ENCODE measurements at regions of chr3 and their contacts with region 1.

Region 1: GRCh38 chr3:32467333-32468070 is 35.1 kb downstream of the CMTM6 start:
- DNase-seq: peak; percentile 55 to 98 (median 84)
- ATAC-seq: peak; percentile 89 to 94 (median 92)
- H3K4me3 ChIP-seq: peak overlapping the region; percentile 13 to 43 (median 28)
- H3K27ac ChIP-seq: peak overlapping the region in 3 of 4 donors; percentile 29 to 57 (median 32)
- H3K4me1 ChIP-seq: peaks cover 0 to 11% (median 4%) of the 10 kb centered on the region in 3 donors
- H3K27me3 ChIP-seq: no peaks in the 10 kb centered on the region
- CTCF ChIP-seq: peak; percentile 97 to 99 (median 98)

Region 2: DNA sequence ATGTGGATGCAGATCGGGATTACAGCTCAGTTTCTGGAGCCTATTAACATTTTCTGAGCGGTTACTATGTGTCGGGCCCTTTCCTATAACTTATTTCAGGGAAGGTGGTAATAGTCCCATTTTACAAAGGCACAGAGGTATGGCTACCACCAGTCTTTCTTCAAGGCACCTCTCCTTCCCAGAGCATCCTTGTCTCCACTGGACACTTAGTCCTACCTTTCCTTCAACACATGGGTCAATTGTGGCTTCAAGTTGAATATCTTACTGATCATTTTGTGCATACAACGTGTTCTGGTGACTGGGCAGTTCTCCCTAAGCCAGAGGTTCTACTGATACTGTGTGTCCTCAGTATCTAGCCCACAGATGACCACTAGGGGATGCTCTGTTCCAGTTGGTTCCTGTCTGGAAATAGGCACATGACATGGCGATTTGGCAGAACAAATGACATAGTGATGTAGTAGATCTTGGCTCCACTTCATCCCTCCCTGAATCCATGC is 289.8 kb before region 1 on chr3:
- intact Hi-C with region 1: loop called in 1 of 3 experiments (anchors 10 kb)
- DNase-seq: peak in 4 of 6 donors; percentile 55 to 83 (median 78)
- ATAC-seq: peak; percentile 92 to 98 (median 96)
- H3K4me3 ChIP-seq: no peak overlapping the region
- H3K27ac ChIP-seq: no peak overlapping the region
- H3K4me1 ChIP-seq: no peaks in the 10 kb centered on the region
- H3K27me3 ChIP-seq: no peaks in the 10 kb centered on the region
- CTCF ChIP-seq: peak; percentile 59 to 74 (median 69)

Region 3: GRCh38 chr3:32340039-32340438 is 127.5 kb before region 1 on chr3:
- intact Hi-C with region 1: no loop called
- DNase-seq: peak in 1 of 6 donors; percentile 25
- ATAC-seq: peak; percentile 71 to 90 (median 84)
- H3K4me3 ChIP-seq: no peak overlapping the region
- H3K27ac ChIP-seq: no peak overlapping the region
- H3K4me1 ChIP-seq: peaks cover 0 to 7% (median 4%) of the 10 kb centered on the region in 3 donors
- H3K27me3 ChIP-seq: no peaks in the 10 kb centered on the region
- CTCF ChIP-seq: peak in 3 of 4 donors; percentile 10 to 26 (median 19)

Region 4: GRCh38 chr3:32384938-32385337 is 82.6 kb before region 1 on chr3:
- intact Hi-C with region 1: loop called in 1 of 3 experiments (anchors 10 kb)
- DNase-seq: no peak
- ATAC-seq: peak in 3 of 4 donors; percentile 42 to 83 (median 72)
- H3K4me3 ChIP-seq: no peak overlapping the region
- H3K27ac ChIP-seq: no peak overlapping the region
- H3K4me1 ChIP-seq: no peaks in the 10 kb centered on the region
- H3K27me3 ChIP-seq: no peaks in the 10 kb centered on the region
- CTCF ChIP-seq: no peak

Region 5: DNA sequence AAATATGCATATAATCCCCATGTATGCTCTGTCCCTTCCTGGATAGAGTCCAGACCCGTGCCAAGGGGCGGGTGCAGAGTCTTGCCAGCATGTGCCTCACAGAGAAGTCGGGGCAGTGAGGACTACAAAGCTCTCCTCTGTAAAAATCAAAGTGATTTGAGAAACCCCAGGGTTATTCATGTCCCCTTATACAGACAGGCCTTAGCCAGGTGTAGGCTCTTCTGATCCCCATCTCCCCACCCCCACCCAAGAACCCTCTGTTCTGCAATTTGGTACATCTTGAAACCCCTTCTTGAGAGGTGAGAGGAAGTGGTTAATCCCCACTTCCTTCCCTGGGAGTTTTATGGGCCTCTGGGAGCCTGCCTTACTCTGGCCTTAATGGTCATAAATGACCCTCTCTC is 375.0 kb after region 1 on chr3:
- intact Hi-C with region 1: no loop called
- DNase-seq: no peak
- ATAC-seq: no peak
- H3K4me3 ChIP-seq: no peak overlapping the region
- H3K27ac ChIP-seq: no peak overlapping the region
- H3K4me1 ChIP-seq: no peaks in the 10 kb centered on the region
- H3K27me3 ChIP-seq: no peaks in the 10 kb centered on the region
- CTCF ChIP-seq: no peak

Measured in pancreas (tissue), 10 donors.